Posterior vena cava (tissue), 2 donors: ENCODE measurements at regions of chr9 and their contacts with region 1.

Region 1: GRCh38 chr9:129641746-129642513 is at the start of gene ASB6:
- DNase-seq: peak; percentile 100
- total RNA-seq, gene ASB6: 14.1 to 16.9 TPM

Region 2: GRCh38 chr9:129783516-129784361 is 141.8 kb after region 1 on chr9:
- intact Hi-C with region 1: loop called (anchors 5 kb)
- DNase-seq: peak; percentile 87

Region 3: DNA sequence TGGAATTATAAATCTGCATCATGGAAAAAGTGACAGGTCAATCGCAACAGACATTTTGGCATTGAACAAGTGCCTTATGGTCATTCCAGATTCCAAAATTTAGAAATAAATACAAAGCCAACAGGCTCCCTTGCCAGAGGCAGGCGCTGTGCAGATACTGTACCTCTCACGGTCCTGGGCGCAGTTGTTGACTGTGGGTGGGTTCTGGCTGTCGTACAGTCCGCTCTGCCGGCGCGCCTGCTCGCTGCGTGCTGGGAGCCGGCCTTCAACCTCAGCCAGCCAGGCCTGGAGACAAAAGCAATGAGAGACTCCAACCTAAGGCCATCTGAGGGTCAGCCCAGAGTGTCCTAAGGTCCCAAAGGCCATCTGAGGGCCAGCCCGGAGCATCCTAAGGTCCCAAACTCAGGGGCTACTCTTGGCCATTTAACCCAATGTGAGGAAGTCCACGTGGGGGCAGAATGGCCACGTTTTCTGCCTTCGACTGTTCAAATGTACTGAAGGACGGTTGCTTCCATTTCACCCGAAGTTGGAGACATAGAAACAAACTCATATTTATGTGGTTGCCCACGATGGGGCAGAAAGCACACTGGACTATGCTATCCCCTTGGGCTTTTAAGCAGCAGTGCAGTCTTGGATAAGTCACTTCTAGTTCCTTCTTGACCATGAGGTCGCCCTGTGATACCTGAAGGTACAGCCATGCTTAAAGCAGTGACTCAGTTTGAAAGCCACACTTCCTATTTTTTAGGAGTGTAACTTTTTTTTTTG is 258.5 kb after region 1 on chr9:
- intact Hi-C with region 1: no loop called
- DNase-seq: no peak